B cell (primary cell): ENCODE measurements at regions of chr14 and their contacts with region 1.

Region 1: GRCh38 chr14:58427281-58428117 is at the starts of genes KIAA0586 and TIMM9:
- DNase-seq: peak; percentile 98
- ATAC-seq: peak; percentile 91
- H3K4me3 ChIP-seq: peak within 1 kb of the TSS; percentile 74 to 99 (median 96)
- H3K4me3 Mint-ChIP-seq: peak within 1 kb of the TSS; percentile 89
- H3K27ac ChIP-seq: peak within 1 kb of the TSS; percentile 96 to 98
- H3K27ac Mint-ChIP-seq: peak within 1 kb of the TSS; percentile 95
- H3K4me1 ChIP-seq: peaks cover 15 to 19% of the 10 kb centered on the region in 2 donors
- H3K4me1 Mint-ChIP-seq: peaks cover 39% of the 10 kb centered on the region
- H3K27me3 ChIP-seq: no peaks in the 10 kb centered on the region
- H3K27me3 Mint-ChIP-seq: no peaks in the 10 kb centered on the region
- CTCF ChIP-seq: no peak
- total RNA-seq, gene KIAA0586: 27.5 and 40.6 TPM in 2 replicates
- total RNA-seq, gene TIMM9: 23.8 and 27.7 TPM in 2 replicates

Region 2: DNA sequence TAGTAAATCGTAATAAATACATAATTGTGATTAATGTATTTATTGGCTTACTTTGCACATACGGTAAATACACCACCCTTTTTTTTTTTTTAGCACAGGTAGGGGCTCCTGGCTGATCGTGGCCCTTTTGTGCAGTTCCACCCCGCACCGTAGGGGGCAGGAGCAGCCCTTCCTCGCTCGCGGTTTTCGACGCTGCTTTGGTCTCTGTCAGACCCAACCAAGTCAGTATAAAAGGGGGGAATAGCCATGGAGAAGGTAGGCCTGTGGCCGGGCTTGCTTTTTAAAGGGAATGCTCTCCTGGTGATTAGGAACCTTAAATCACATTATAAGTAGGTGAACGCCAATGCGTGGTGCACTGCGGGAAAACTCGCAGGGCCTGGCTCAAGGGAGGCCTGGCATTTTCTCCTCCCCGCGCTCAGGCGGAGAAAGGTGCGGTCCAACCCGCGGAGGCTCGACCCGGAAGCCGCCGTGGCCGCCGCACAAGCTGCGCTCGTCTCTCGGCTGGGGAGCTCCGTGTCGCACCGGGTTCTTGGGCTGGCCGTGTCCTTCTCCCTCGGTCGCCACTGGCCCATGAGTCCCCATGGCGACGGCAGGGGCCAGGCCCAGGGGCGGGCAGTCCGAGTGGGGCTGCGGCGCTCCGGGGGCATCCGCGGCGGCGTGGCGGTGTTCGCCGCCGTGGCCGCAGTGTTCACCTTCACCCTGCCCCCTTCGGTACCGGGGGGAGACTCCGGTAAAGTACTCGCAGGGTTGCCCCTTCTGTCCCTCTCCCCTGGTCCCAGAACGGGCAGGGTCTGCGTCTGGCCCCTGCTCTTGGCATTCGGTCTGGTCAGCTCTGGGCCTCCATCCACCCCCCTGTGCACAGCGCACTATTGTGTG is 1847.9 kb before region 1 on chr14 and contains the start of gene TMEM260:
- CTCF ChIA-PET with region 1: no interaction called
- POLR2A ChIA-PET with region 1: no interaction called
- intact Hi-C with region 1: loop called (anchors 10 kb)
- DNase-seq: peak; percentile 97
- ATAC-seq: peak; percentile 94
- H3K4me3 ChIP-seq: peak within 1 kb of the TSS; percentile 75 to 97 (median 90)
- H3K4me3 Mint-ChIP-seq: peak within 1 kb of the TSS; percentile 96
- H3K27ac ChIP-seq: peak within 1 kb of the TSS; percentile 78 to 91
- H3K27ac Mint-ChIP-seq: peak within 1 kb of the TSS; percentile 98
- H3K4me1 ChIP-seq: peaks cover 23 to 24% of the 10 kb centered on the region in 2 donors
- H3K4me1 Mint-ChIP-seq: peaks cover 38% of the 10 kb centered on the region
- H3K27me3 ChIP-seq: peaks cover 0 to 4% (median 0%) of the 10 kb centered on the region in 4 experiments
- H3K27me3 Mint-ChIP-seq: peaks cover 3% of the 10 kb centered on the region
- CTCF ChIP-seq: peak; percentile 97
- total RNA-seq, gene TMEM260: 33.9 and 39.3 TPM in 2 replicates

Region 3: GRCh38 chr14:58239244-58240195 is 188.0 kb before region 1 on chr14:
- CTCF ChIA-PET with region 1: no interaction called
- POLR2A ChIA-PET with region 1: interaction called, 3 read pairs
- intact Hi-C with region 1: loop called (anchors 1 kb)
- DNase-seq: peak; percentile 90
- ATAC-seq: peak; percentile 19
- H3K4me3 ChIP-seq: peak overlapping the region; percentile 56 to 99 (median 92)
- H3K4me3 Mint-ChIP-seq: no peak overlapping the region
- H3K27ac ChIP-seq: peak overlapping the region; percentile 51 to 88
- H3K27ac Mint-ChIP-seq: no peak overlapping the region
- H3K4me1 ChIP-seq: peaks cover 3 to 15% of the 10 kb centered on the region in 2 donors
- H3K4me1 Mint-ChIP-seq: peaks cover 22% of the 10 kb centered on the region
- H3K27me3 ChIP-seq: no peaks in the 10 kb centered on the region
- H3K27me3 Mint-ChIP-seq: no peaks in the 10 kb centered on the region
- CTCF ChIP-seq: no peak

Region 4: GRCh38 chr14:58297762-58298476 is 129.6 kb before region 1 on chr14:
- CTCF ChIA-PET with region 1: interaction called, 5 read pairs
- POLR2A ChIA-PET with region 1: interaction called, 23 read pairs
- intact Hi-C with region 1: loop called (anchors 1 kb)
- DNase-seq: peak; percentile 99
- ATAC-seq: peak; percentile 80
- H3K4me3 ChIP-seq: peak overlapping the region; percentile 85 to 98 (median 91)
- H3K4me3 Mint-ChIP-seq: no peak overlapping the region
- H3K27ac ChIP-seq: peak overlapping the region; percentile 96 to 98
- H3K27ac Mint-ChIP-seq: no peak overlapping the region
- H3K4me1 ChIP-seq: peaks cover 21 to 33% of the 10 kb centered on the region in 2 donors
- H3K4me1 Mint-ChIP-seq: peaks cover 43% of the 10 kb centered on the region
- H3K27me3 ChIP-seq: no peaks in the 10 kb centered on the region
- H3K27me3 Mint-ChIP-seq: no peaks in the 10 kb centered on the region
- CTCF ChIP-seq: no peak

Region 5: DNA sequence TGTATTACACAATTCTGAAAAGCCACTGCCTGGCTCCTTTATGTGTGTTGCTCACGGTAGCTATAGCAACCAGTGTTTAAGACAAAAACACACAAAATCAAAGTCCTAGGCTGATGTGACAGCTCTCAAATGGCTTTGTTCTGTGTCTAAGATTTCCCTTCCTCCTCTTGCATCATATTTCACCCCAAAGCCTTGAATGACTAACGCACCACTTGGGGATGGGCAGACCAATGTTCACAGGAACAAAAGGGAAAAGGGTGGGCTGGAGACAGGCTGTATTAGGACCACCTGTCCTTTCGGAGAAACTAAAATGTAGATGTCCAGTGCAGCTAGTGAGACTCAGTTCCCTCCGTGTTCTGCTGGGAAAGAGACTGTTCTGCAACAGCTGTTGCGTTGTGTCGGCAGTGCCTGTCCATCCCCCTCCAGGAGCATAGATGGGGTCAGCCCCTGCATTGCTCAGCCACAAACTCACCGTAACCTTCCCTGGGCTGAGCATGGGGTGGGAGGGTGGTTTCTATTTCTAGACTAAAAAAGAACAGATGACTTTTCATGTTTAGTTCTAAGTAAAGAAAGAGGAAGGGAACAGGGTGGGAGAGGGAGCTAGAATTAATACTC is 734.2 kb after region 1 on chr14:
- CTCF ChIA-PET with region 1: no interaction called
- POLR2A ChIA-PET with region 1: no interaction called
- intact Hi-C with region 1: no loop called
- DNase-seq: no peak
- ATAC-seq: no peak
- H3K4me3 ChIP-seq: no peak overlapping the region
- H3K4me3 Mint-ChIP-seq: no peak overlapping the region
- H3K27ac ChIP-seq: no peak overlapping the region
- H3K27ac Mint-ChIP-seq: no peak overlapping the region
- H3K4me1 ChIP-seq: peaks cover 0 to 8% of the 10 kb centered on the region in 2 donors
- H3K4me1 Mint-ChIP-seq: no peaks in the 10 kb centered on the region
- H3K27me3 ChIP-seq: peaks cover 0 to 13% (median 6%) of the 10 kb centered on the region in 4 experiments
- H3K27me3 Mint-ChIP-seq: peaks cover 12% of the 10 kb centered on the region
- CTCF ChIP-seq: no peak

Region 6: GRCh38 chr14:59483900-59484638 is 1056.6 kb after region 1 on chr14 and contains the starts of genes JKAMP and L3HYPDH:
- CTCF ChIA-PET with region 1: no interaction called
- POLR2A ChIA-PET with region 1: no interaction called
- intact Hi-C with region 1: loop called (anchors 1 kb)
- DNase-seq: peak; percentile 96
- ATAC-seq: peak; percentile 92
- H3K4me3 ChIP-seq: peak within 1 kb of the TSS; percentile 83 to 97 (median 93)
- H3K4me3 Mint-ChIP-seq: peak within 1 kb of the TSS; percentile 96
- H3K27ac ChIP-seq: peak within 1 kb of the TSS; percentile 57 to 79
- H3K27ac Mint-ChIP-seq: peak within 1 kb of the TSS; percentile 90
- H3K4me1 ChIP-seq: peaks cover 36 to 40% of the 10 kb centered on the region in 2 donors
- H3K4me1 Mint-ChIP-seq: peaks cover 56% of the 10 kb centered on the region
- H3K27me3 ChIP-seq: no peaks in the 10 kb centered on the region
- H3K27me3 Mint-ChIP-seq: no peaks in the 10 kb centered on the region
- CTCF ChIP-seq: peak; percentile 70
- total RNA-seq, gene JKAMP: 25.7 and 30.3 TPM in 2 replicates
- total RNA-seq, gene L3HYPDH: 67.3 and 74.5 TPM in 2 replicates